ENCODE measurements at regions of chr6 and their contacts with region 1.

Region 1: DNA sequence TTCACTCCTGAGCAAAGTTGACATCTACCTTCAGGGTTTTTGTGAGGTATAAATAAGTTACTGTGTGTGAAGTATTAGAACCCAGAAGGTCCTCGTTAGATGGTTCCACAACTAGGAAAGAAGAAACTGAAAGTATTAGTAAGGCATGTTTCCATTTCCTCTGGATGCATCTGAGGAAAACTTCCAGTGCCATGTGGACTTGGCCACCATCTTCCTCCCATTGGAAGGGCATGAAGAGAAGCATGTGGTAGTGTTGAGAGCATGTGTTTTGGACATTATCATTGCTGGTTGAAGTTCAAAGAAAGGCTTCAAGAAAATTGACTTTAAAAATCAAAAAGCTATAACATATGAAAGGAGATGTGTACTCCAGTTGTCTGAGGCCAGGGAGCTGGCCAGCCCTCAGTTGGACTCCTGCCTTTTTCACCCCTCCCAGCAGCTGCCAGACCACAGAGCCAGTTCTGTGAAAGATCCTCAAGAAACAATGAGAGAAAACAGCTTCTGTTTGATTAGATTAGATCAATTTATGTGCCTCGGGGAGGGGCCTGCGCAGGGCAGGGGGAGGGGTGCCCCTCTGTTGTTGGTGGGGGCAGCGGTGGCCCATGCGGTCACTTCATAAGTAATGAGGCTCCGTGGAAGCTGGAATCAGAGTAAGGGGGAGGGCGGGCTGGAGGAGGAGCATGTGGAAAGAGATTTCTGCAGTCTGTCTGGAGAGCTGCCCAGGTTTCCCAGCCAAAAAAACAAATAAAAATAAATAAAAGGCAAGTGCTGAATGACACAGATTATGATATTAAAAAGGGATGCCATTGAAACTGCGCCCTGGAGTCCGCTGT is 154.0 kb downstream of the JARID2 start:
- DNase-seq: no peak
- H3K4me3 Mint-ChIP-seq: peak overlapping the region; percentile 80
- H3K27ac Mint-ChIP-seq: peak overlapping the region; percentile 66
- H3K4me1 Mint-ChIP-seq: peaks cover 79% of the 10 kb centered on the region
- H3K27me3 Mint-ChIP-seq: no peaks in the 10 kb centered on the region

Region 2: GRCh38 chr6:15420959-15421438 is 21.1 kb after region 1 on chr6:
- intact Hi-C with region 1: no loop called
- DNase-seq: no peak
- H3K4me3 Mint-ChIP-seq: peak overlapping the region; percentile 53
- H3K27ac Mint-ChIP-seq: peak overlapping the region; percentile 89
- H3K4me1 Mint-ChIP-seq: peaks cover 68% of the 10 kb centered on the region
- H3K27me3 Mint-ChIP-seq: no peaks in the 10 kb centered on the region

Region 3: GRCh38 chr6:15439410-15440025 is 39.7 kb after region 1 on chr6:
- intact Hi-C with region 1: loop called (anchors 5 kb)
- DNase-seq: no peak
- H3K4me3 Mint-ChIP-seq: peak overlapping the region; percentile 7
- H3K27ac Mint-ChIP-seq: peak overlapping the region; percentile 71
- H3K4me1 Mint-ChIP-seq: peaks cover 74% of the 10 kb centered on the region
- H3K27me3 Mint-ChIP-seq: no peaks in the 10 kb centered on the region

Measured in activated T-helper 2 cell treated with anti-CD3 and anti-CD28 coated beads, Interferon-gamma antibody, Interleukin-2, Interleukin-4, amounts not matched to agents 10 μg/mL and 5 μg/mL and 100 μg/mL, durations not matched to agents 14 hours and 24 hours and 36 hours (primary cell).